Right cardiac atrium (tissue), 5 donors: ENCODE measurements at regions of chr9 and their contacts with region 1.

Region 1: DNA sequence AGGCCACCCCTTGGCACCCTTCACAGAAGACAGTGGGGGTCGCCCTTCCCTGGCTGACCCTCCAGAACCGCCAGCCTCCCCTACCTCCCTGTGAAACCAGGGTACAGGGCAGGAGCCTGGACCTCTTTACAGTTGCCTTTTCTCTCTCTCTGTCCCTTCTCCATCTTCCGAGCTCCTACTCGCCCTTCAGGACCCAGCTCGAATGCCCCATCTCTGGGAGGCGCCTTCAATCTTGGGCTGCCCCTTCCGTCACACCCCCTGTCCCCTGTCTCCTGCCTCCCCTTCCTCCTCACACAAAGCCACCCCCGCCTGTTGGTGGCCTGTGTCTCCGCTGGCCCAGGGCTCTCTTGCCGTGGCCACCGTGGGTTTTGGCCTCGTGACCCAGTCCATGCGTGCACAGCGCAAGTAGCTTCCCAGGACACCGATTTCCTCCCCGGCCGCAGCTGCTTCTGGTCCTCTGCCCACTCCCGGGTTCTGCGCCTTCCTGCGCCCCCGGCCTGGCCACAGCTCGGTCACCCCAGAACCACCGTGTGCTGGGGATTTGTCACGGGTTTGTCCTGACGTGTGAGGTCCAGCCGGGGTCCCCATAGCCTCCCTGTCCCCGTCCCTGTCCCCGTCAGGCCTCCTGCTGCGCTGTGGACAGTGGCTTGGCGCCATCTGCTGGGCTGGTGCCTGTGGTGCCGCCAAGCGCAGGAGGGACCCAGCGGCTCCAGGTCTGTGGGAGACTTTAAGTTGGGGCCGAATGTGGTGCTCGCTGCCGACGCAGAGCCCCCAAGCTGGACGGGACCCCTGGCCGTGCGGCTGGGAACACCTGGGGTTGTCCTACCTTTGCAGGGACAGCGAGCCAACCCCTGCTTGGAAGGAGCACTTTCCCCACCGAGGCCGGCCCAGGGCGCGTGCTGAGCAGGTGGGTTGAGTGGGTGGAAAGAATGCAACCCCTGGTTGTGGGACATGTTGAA is 4.0 kb upstream of the TMEM250 start:
- DNase-seq: peak; percentile 82 to 92 (median 92)
- ATAC-seq: peak; percentile 36 to 55
- H3K4me3 ChIP-seq: no peak overlapping the region
- H3K27ac ChIP-seq: no peak overlapping the region
- H3K4me1 ChIP-seq: no peaks in the 10 kb centered on the region
- H3K27me3 ChIP-seq: no peaks in the 10 kb centered on the region

Region 2: GRCh38 chr9:135701959-135702721 is 420.6 kb before region 1 on chr9 and contains the start of gene KCNT1:
- intact Hi-C with region 1: loop called in 1 of 4 experiments (anchors 10 kb)
- DNase-seq: peak; percentile 36 to 86 (median 82)
- ATAC-seq: peak; percentile 40 to 64
- H3K4me3 ChIP-seq: no peak within 1 kb of the TSS
- H3K27ac ChIP-seq: no peak within 1 kb of the TSS
- H3K4me1 ChIP-seq: no peaks in the 10 kb centered on the region
- H3K27me3 ChIP-seq: no peaks in the 10 kb centered on the region
- total RNA-seq, gene KCNT1: 0.17 to 1.1 (median 0.32) TPM in 3 of 4 donors, not detected in the other

Region 3: DNA sequence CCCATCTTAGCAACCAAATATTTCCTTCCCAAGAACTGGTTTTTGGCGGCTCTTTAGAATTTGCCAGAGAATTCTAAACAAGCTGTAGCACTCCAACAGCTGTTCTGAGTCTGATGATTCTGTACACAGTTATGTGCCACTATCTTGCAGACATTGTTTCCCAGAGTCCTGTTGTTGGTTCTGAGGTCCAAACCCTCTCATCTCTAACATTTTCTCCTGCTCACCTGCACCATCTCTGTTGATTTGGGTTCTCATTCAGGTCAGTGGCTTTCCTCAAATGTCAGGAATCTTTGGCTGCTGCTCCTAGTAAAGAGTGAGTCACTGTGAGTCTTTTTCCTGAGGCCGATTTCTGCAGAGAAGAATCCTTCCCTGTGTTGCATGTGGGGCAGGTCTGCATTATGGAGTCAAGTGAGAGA is 265.3 kb before region 1 on chr9:
- intact Hi-C with region 1: loop called in 2 of 4 experiments (anchors 5 to 10 kb)
- DNase-seq: no peak
- ATAC-seq: no peak
- H3K4me3 ChIP-seq: no peak overlapping the region
- H3K27ac ChIP-seq: no peak overlapping the region
- H3K4me1 ChIP-seq: no peaks in the 10 kb centered on the region
- H3K27me3 ChIP-seq: no peaks in the 10 kb centered on the region

Region 4: DNA sequence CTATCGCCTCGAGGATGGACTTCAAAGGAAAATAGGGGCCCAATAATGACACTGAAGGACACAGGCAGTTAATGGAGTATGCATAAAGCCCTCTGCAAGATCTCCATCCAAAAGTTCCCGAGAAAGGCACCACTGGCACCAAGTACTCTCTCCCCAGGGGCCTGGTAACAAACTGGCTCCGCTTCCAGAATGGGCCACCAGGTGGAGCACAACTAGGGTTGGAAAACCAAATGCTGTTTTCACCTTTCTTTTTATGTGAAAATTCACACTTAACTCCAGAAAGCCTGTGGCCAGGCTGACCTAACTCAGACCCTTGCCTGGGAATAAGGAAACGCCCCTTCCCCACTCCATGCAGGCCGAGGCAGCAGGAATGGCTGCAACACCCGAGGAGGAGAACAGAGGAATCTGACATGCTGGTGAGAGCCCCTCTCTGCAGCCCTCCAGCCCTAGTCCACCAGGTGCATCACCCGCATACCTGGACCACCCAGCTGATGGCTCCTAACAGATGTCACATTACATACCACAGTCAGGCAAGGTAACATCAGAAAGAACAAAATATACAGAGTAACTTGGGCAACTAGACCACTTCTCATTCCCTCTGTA is 258.2 kb before region 1 on chr9:
- intact Hi-C with region 1: loop called in 3 of 4 experiments (anchors 5 to 10 kb)
- DNase-seq: peak; percentile 64 to 89 (median 81)
- ATAC-seq: peak; percentile 22 to 43
- H3K4me3 ChIP-seq: no peak overlapping the region
- H3K27ac ChIP-seq: no peak overlapping the region
- H3K4me1 ChIP-seq: no peaks in the 10 kb centered on the region
- H3K27me3 ChIP-seq: no peaks in the 10 kb centered on the region

Region 5: GRCh38 chr9:135887585-135888050 is 235.1 kb before region 1 on chr9:
- intact Hi-C with region 1: loop called in 1 of 4 experiments (anchors 10 kb)
- DNase-seq: no peak
- ATAC-seq: peak; percentile 15 to 43
- H3K4me3 ChIP-seq: no peak overlapping the region
- H3K27ac ChIP-seq: no peak overlapping the region
- H3K4me1 ChIP-seq: peaks cover 32% of the 10 kb centered on the region
- H3K27me3 ChIP-seq: no peaks in the 10 kb centered on the region

Region 6: GRCh38 chr9:135949501-135950134 is 173.1 kb before region 1 on chr9:
- intact Hi-C with region 1: no loop called
- DNase-seq: peak in 2 of 3 donors; percentile 21 to 47
- ATAC-seq: no peak
- H3K4me3 ChIP-seq: no peak overlapping the region
- H3K27ac ChIP-seq: no peak overlapping the region
- H3K4me1 ChIP-seq: no peaks in the 10 kb centered on the region
- H3K27me3 ChIP-seq: no peaks in the 10 kb centered on the region

Region 7: DNA sequence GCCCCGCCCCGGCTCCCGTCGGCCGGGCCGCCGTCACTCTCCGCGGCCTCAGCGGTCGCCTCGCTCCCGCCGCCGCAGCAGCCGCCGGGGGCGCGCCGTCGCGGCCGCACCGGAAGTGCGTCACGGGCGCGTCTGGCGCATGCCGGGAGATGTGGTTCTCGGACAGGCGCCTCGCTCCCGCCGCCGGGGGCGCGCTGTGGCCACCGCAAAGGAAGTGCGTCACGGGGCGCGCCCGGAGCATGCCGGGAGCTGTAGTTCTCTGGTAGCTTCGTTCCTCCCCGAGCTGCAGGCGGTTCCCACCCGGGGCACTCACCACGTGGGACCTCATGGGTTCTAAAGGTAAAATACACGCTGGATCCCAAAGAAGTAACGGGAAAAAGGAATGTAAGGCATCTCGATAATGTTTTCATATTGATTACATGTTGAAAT is 161.4 kb before region 1 on chr9 and contains the start of gene UBAC1:
- intact Hi-C with region 1: loop called in 3 of 4 experiments (anchors 2 to 5 kb)
- DNase-seq: peak; percentile 97 to 99 (median 99)
- ATAC-seq: peak; percentile 93 to 94
- H3K4me3 ChIP-seq: peak within 1 kb of the TSS; percentile 96
- H3K27ac ChIP-seq: peak within 1 kb of the TSS; percentile 98
- H3K4me1 ChIP-seq: no peaks in the 10 kb centered on the region
- H3K27me3 ChIP-seq: no peaks in the 10 kb centered on the region
- total RNA-seq, gene UBAC1: 64.0 to 88.7 (median 76.2) TPM

Region 8: DNA sequence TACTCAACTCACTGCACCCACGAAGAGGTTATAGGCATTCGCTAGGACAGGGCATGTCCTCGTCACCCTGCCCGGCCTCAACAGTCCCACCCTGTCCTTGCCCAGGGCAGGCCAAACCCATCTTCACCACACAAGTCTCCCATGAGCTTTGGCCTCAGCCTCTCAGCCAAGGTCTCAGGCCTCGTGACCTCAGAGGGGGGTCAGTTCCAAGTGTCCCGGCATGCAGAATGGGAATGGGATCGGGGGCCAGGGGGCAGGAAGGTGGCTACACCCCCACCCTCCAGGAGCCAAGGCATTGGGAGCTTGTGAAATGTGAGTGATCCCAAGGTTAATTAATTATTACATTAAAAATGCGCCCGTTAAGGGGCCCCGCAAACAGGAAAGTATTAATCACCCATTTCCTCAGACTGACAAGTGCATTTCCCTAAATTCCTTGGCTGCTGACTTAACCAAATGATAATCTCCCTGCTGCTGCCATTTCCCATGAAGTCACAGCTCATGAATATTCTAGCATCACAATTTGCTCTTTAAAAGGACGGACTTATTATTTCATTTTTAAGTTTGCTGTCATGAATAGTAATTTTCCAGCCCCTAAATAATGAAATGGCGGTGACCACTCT is 153.5 kb before region 1 on chr9:
- intact Hi-C with region 1: loop called (anchors 1 to 5 kb)
- DNase-seq: peak in 1 of 3 donors; percentile 52
- ATAC-seq: peak; percentile 12 to 54
- H3K4me3 ChIP-seq: no peak overlapping the region
- H3K27ac ChIP-seq: no peak overlapping the region
- H3K4me1 ChIP-seq: no peaks in the 10 kb centered on the region
- H3K27me3 ChIP-seq: no peaks in the 10 kb centered on the region